ENCODE measurements at regions of chr18 and their contacts with region 1.

Region 1: GRCh38 chr18:58781627-58782194 is 83.0 kb upstream of the ZNF532 start:
- DNase-seq: peak; percentile 87

Region 2: GRCh38 chr18:58730618-58731017 is 51.1 kb before region 1 on chr18:
- intact Hi-C with region 1: no loop called
- DNase-seq: no peak

Region 3: GRCh38 chr18:58847383-58848071 is 65.8 kb after region 1 on chr18:
- intact Hi-C with region 1: loop called in 1 of 2 experiments (anchors 10 kb)
- DNase-seq: peak; percentile 80

Region 4: DNA sequence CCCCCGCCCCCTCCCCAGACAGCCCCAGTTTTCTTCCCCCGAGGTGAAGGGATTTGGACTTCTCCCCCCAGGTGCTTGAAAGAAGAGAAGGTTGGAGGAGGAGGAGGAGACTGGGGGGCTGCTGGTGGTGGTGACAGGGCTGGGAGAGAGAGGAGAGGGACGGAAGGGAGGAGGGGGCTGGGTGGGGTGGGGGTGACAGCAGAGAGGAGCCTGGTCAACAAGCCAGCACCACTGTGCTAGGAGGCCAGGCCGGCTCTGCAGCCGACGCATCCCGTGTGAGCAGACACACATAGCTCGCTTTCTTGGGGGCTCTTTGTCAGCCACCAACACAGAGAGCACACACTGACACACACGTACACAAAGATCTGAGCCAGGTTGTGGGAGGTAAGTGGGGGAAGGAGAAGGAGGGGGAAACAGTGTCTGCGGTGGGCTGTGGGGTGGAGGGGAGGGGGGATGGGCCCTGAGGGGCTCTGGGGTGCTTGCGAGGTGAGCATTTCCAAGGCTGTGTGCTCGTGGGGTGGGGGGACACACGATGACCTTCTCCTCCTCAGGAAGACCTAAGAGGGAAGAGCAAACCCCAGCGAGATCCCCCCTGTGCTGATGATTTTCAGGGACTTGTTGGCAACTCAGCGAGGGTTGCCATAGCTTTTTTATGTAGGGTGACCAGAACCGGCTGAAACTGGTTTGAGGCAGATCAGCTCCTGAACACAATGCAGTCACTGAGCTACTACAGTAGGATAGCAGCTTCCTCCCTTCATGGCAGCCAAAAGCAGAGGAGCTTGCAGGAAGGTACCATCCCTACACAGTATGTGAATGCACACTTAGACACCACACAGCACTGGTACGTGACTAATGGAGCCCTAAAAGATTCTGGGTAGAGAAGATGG is 82.7 kb after region 1 on chr18 and contains the start of gene ZNF532:
- intact Hi-C with region 1: loop called in 1 of 2 experiments (anchors 5 kb)
- DNase-seq: no peak
- total RNA-seq, gene ZNF532: 79.1 to 83.6 TPM

Region 5: DNA sequence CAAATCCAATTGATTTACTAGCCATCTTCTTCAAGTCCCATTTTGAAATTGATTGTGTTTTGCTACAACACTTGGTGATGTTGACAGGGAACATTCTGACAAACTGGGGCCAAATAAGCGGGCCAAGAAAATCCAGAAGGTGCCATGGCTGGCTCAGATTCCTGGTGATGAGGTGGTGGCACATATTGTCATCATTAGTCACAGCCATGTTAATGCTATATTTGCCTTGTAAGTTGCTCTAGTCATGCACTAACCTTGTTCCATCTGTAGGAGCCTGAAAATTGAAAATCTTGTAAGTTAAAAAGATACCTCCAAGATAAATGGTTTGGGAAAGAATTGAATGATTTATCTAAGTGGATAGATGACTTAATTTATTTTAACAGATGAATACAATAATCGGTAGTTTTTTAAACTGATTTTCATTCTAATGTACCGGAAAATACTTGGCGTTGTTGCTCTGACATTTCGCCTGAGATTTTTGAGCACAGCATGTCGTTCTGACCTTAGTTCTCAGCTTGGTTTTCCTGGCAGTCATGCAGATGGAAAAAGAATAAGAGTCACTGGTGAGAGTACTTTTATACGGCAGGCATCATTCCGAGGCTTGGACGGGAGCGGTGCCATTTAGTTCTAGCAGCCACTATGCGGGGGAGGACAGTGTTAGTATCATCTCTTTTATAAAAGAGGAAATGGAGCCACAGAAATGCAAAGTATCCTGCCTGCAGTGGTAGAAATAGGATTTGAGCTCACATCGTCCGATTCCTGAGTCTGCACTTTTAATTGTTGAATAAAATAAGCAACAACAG is 216.9 kb after region 1 on chr18:
- intact Hi-C with region 1: loop called in 1 of 2 experiments (anchors 5 kb)
- DNase-seq: peak; percentile 94

Region 6: GRCh38 chr18:59056706-59057492 is 275.2 kb after region 1 on chr18:
- intact Hi-C with region 1: loop called (anchors 2 kb)
- DNase-seq: peak; percentile 91